GM18951 (cell line): ENCODE measurements at regions of chr2 and their contacts with region 1.

Region 1: DNA sequence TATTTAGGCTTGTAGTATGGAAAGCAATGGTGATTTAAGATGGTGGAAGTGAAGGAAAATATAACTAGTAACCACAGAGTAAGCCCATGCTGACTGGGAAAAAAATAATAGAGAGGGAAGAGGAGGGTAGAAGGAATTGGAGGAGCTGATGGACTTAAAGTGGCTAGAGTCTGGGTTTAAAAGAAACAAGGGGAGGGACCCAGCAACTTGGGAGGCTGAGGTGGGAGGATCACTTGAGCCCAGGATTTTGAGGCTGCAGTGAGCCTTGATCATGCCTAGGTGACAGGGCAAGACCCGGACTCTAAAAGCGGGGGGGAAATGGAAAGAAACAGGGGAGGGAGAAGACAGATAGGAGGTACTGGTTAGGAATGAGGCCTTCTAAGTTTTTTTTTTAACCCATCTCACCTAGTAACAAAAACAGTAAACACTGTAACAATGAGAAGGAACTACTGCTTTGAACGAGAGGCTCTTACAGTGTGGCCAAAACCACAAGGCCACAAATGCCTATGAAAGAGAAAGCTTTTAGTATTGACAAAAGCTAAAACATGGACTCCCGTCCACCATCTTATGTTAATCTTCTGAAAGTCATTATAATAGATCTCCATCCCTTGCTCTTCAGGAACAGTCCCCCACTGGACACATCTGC is 26.6 kb downstream of the METTL8 start:
- POLR2A ChIP-seq: no peak

Region 2: GRCh38 chr2:171320208-171320621 is 86.9 kb before region 1 on chr2:
- in situ Hi-C with region 1: loop called (anchors 5 kb)
- POLR2A ChIP-seq: peak; percentile 44